Activated naive CD4-positive, alpha-beta T cell treated with anti-CD3 and anti-CD28 coated beads for 36 hours (primary cell): ENCODE measurements at regions of chr3 and their contacts with region 1.

Region 1: DNA sequence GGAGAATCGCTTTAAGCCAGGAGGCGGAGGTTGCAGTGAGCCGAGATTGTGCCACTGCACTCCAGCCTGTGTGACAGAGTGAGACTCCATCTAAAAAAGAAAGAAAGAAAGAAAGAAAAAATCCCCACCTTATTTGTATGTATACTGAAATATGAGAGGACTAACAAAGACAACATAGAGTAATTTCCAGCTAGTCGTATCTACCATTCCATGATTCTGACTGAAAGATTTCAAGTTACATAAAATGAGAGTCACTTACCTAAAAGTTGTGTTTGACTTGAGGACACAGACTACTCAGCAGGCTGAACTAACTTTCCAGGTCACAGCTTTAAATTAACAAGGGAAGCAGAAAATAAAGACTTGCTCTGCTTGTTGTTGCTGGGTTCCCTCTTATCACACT is 18.8 kb upstream of the PRKCI start:
- DNase-seq: no peak
- H3K4me3 Mint-ChIP-seq: no peak overlapping the region
- H3K27ac Mint-ChIP-seq: peak overlapping the region; percentile 42
- H3K4me1 Mint-ChIP-seq: peaks cover 15% of the 10 kb centered on the region
- H3K27me3 Mint-ChIP-seq: peaks cover 3% of the 10 kb centered on the region

Region 2: GRCh38 chr3:170257145-170257544 is 53.7 kb after region 1 on chr3:
- CTCF ChIA-PET with region 1: no interaction called
- intact Hi-C with region 1: loop called (anchors 1 kb)
- DNase-seq: peak; percentile 58
- H3K4me3 Mint-ChIP-seq: no peak overlapping the region
- H3K27ac Mint-ChIP-seq: no peak overlapping the region
- H3K4me1 Mint-ChIP-seq: peaks cover 41% of the 10 kb centered on the region
- H3K27me3 Mint-ChIP-seq: no peaks in the 10 kb centered on the region

Region 3: DNA sequence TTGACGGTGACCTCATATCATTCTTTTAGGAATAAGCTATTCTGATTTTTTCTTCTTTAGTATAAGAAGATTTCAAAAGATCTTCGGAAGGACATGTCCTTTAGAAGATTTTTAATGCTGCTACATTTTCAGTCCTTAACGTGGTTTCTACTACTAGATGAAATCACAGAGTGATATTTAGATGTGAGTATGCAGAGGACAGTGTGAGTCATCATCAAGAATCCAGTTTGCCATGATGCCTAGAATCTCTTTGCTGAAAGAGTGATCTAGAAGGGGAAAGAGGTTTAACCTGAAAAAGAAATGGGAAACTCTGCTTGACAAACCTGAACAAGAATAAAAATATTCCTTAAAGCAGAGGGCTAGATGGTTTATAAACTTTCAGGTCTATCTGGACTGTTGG is 339.2 kb after region 1 on chr3:
- CTCF ChIA-PET with region 1: no interaction called
- intact Hi-C with region 1: no loop called
- DNase-seq: no peak
- H3K4me3 Mint-ChIP-seq: no peak overlapping the region
- H3K27ac Mint-ChIP-seq: no peak overlapping the region
- H3K4me1 Mint-ChIP-seq: no peaks in the 10 kb centered on the region
- H3K27me3 Mint-ChIP-seq: peaks cover 19% of the 10 kb centered on the region